Left cardiac atrium (tissue), 4 donors: ENCODE measurements at regions of chr12 and their contacts with region 1.

Region 1: GRCh38 chr12:22856178-22856577 is 231.2 kb downstream of the ETNK1 start:
- DNase-seq: no peak
- ATAC-seq: no peak

Region 2: GRCh38 chr12:22974865-22975264 is 118.7 kb after region 1 on chr12:
- intact Hi-C with region 1: loop called in 1 of 2 experiments (anchors 10 kb)
- DNase-seq: no peak
- ATAC-seq: peak in 1 of 2 donors; percentile 65

Region 3: DNA sequence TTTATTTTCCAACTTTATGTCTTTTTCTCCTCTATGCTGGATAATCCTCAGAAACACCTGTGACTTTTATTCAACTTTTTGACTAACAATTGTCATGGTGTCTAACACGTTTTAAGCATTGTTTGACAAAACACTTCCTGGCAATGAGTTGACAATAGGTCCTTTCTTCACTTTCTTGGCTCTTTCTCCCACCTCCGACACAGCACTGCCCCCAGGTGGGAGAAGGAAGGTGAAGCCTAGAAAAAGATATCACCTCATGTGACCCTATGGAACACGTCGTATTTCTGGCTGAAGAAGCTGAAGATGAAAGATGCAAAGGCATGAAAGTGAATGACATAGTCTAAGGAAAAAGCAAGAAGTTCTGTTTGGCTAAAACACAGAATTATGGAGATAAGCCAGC is 198.8 kb after region 1 on chr12:
- intact Hi-C with region 1: loop called in 1 of 2 experiments (anchors 10 kb)
- DNase-seq: no peak
- ATAC-seq: no peak

Region 4: GRCh38 chr12:23204933-23205778 is 349.0 kb after region 1 on chr12:
- intact Hi-C with region 1: loop called in 1 of 2 experiments (anchors 5 kb)
- DNase-seq: no peak
- ATAC-seq: peak; percentile 41 to 68

Region 5: GRCh38 chr12:24778486-24779304 is 1922.5 kb after region 1 on chr12:
- intact Hi-C with region 1: loop called in 1 of 2 experiments (anchors 10 kb)
- DNase-seq: no peak
- ATAC-seq: no peak